ENCODE measurements at regions of chr6 and their contacts with region 1.

Region 1: DNA sequence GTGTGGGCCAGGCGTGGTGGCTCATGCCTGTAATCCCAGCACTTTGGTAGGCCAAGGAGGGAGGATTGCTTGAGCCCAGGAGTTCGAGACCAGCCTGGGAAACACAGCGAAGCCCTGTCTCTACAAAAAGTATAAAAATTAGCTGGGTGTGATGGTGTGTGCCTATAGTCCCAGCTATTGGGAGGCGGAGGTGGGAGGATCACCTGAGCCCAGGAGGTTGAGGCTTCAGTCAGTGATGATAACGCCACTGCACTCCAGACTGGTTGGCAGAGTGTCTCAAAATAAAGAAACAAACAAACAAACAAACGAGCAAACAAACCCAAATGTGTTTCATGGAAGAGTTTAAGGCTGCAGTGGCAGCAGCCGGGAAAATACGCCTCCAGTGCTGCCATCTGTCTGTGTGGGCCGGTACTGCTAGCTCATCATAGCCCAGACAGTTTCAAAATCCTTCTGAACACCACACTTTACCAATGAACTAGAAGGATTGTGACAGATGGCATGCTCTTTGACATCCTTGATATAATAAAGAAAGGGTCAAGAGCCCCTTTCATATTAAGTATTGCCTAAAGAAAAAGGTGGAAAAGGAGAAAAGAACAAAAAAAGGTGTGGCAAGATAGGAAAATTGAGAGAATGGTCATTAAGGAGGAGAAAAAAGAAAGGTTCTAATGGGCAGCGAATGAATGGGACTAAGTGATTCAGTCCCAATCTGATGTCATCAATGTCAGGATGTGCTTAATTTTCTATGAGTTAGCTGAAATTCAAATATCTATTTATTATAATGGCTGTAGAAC is 298.6 kb downstream of the SYNE1 start:
- DNase-seq: peak; percentile 61
- H3K4me3 Mint-ChIP-seq: no peak overlapping the region
- H3K27ac Mint-ChIP-seq: no peak overlapping the region
- H3K4me1 Mint-ChIP-seq: peaks cover 10% of the 10 kb centered on the region
- H3K27me3 Mint-ChIP-seq: peaks cover 2% of the 10 kb centered on the region

Region 2: DNA sequence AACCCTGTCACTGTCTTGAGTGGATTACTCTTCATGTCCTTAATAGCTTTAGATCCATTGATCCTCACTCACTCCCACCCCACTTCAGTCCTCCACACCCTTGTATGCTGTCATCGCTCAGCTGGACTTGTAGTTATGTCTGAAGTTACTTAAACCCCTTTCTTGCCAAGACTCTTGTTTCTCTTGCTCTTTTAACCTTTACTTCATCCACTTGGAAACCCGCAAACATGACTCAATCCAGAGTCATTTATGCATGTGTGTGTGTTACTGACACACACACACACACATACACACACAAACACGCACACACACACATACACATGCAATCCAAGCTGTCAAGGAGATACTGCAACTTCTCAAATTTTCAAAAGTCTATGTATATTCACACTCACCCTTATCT is 43.2 kb before region 1 on chr6:
- CTCF ChIA-PET with region 1: interaction called, 46 read pairs
- POLR2A ChIA-PET with region 1: interaction called, 3 read pairs
- DNase-seq: no peak
- H3K4me3 Mint-ChIP-seq: no peak overlapping the region
- H3K27ac Mint-ChIP-seq: no peak overlapping the region
- H3K4me1 Mint-ChIP-seq: peaks cover 17% of the 10 kb centered on the region
- H3K27me3 Mint-ChIP-seq: no peaks in the 10 kb centered on the region

Region 3: DNA sequence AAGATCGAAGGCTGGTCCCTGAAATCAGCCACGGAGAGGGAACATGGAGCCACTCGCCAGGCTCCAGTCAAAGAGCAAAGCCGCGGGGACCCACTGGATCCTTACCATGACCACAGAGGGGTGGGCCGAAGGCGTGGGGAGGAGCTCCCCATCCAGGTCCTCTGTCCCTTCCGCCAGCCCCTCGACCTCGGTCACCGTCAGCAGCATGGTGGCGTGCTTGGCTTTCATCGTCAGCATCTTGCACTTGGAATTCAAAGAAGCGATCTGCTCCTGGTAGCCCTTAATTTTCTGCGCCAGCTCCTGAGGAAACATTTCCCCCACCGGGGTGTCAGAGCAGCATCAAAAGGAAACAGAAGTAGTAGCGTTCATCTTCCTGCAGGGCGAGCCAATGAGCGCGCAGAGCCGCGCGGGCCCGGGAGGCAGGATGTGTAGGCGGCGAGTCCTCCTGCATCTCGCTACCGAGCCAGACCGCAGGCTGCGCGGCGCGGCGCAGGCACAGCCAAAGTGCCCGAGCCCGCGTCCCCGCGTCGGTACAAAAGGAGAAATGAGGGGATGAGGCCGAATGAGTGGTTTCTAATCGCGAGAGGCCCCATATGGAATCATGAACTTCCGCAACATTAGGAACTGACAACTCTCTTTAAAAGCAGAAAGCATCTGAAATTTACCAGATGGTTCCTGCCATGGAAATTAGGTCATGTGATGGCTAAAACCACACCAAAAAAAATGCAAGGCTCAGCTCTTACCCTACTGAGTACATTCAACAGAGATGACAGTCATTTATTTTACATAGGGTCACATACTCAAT is 36.6 kb before region 1 on chr6:
- CTCF ChIA-PET with region 1: interaction called, 46 read pairs
- POLR2A ChIA-PET with region 1: interaction called, 14 read pairs
- DNase-seq: peak; percentile 92
- H3K4me3 Mint-ChIP-seq: peak overlapping the region; percentile 95
- H3K27ac Mint-ChIP-seq: peak overlapping the region; percentile 97
- H3K4me1 Mint-ChIP-seq: peaks cover 30% of the 10 kb centered on the region
- H3K27me3 Mint-ChIP-seq: no peaks in the 10 kb centered on the region

Region 4: DNA sequence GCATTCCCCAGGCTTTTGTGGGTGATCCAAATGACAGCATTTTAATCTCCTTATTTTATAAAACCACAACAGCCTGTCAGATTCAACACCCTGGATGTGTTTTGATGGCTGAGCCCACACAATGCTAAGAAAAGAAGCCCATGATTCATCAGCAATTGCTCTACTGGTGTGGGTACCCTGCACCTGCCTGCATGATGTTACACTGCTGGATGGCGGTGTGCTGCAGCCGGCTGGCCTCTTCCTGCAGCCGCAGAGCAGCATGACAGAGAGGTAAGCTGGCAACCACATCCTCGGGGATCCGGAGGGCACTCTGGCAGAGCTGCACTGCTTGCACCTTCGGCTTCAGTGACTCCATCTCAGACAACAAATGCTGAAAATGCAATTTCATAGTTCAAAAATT is 28.9 kb before region 1 on chr6:
- CTCF ChIA-PET with region 1: interaction called, 11 read pairs
- POLR2A ChIA-PET with region 1: no interaction called
- DNase-seq: peak; percentile 83
- H3K4me3 Mint-ChIP-seq: no peak overlapping the region
- H3K27ac Mint-ChIP-seq: no peak overlapping the region
- H3K4me1 Mint-ChIP-seq: peaks cover 23% of the 10 kb centered on the region
- H3K27me3 Mint-ChIP-seq: no peaks in the 10 kb centered on the region

Region 5: GRCh38 chr6:152316024-152316423 is 22.5 kb before region 1 on chr6:
- CTCF ChIA-PET with region 1: interaction called, 13 read pairs
- POLR2A ChIA-PET with region 1: no interaction called
- DNase-seq: no peak
- H3K4me3 Mint-ChIP-seq: no peak overlapping the region
- H3K27ac Mint-ChIP-seq: no peak overlapping the region
- H3K4me1 Mint-ChIP-seq: no peaks in the 10 kb centered on the region
- H3K27me3 Mint-ChIP-seq: peaks cover 12% of the 10 kb centered on the region

Region 6: DNA sequence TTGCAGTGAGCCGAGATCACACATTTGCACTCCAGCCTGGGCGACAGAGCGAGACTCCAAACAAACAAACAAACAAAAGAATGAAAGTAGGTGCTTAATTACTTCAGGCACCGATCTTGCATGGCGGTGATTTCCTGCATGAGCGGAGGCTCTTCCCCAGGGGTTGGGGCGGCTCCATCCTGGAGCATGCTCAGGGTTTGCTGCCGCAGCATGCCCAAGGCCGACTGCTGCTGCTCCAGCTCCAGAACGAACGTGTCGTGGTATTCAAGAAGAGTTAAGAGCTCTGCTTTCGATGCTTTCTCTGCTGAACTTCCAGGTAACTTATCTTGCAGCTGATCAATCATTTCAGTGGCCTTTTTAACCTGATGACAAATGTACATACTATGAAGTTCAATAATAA is 15.2 kb before region 1 on chr6:
- CTCF ChIA-PET with region 1: interaction called, 11 read pairs
- POLR2A ChIA-PET with region 1: no interaction called
- DNase-seq: no peak
- H3K4me3 Mint-ChIP-seq: no peak overlapping the region
- H3K27ac Mint-ChIP-seq: no peak overlapping the region
- H3K4me1 Mint-ChIP-seq: no peaks in the 10 kb centered on the region
- H3K27me3 Mint-ChIP-seq: peaks cover 20% of the 10 kb centered on the region

Region 7: DNA sequence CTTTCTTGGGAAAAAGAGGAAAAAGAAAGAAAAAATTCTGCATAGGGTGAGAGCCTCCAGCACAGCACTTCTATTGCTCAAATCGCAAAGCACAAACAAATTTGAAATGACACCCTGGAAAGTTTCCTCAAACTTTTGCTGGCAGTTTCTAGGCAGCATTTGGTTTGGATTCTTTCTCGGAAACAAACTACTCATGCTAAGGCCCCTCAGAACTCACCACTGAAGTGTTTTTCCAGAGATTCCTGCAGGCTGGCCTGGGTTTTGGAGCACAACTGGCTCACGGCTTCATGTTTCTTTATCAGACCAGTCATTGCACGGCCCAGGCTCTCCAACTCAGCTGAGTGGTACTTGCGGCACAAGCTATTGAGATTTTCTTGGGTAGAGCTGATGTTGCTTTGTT is 60.9 kb after region 1 on chr6:
- CTCF ChIA-PET with region 1: no interaction called
- POLR2A ChIA-PET with region 1: no interaction called
- DNase-seq: no peak
- H3K4me3 Mint-ChIP-seq: no peak overlapping the region
- H3K27ac Mint-ChIP-seq: no peak overlapping the region
- H3K4me1 Mint-ChIP-seq: no peaks in the 10 kb centered on the region
- H3K27me3 Mint-ChIP-seq: no peaks in the 10 kb centered on the region